ENCODE measurements at regions of chr22 and their contacts with region 1.

Region 1: GRCh38 chr22:50316116-50317065 is 8.9 kb upstream of the PLXNB2 start:
- DNase-seq: no peak
- H3K4me3 ChIP-seq: no peak overlapping the region
- H3K27ac ChIP-seq: no peak overlapping the region
- H3K4me1 ChIP-seq: no peaks in the 10 kb centered on the region
- H3K27me3 ChIP-seq: no peaks in the 10 kb centered on the region
- CTCF ChIP-seq: no peak

Region 2: DNA sequence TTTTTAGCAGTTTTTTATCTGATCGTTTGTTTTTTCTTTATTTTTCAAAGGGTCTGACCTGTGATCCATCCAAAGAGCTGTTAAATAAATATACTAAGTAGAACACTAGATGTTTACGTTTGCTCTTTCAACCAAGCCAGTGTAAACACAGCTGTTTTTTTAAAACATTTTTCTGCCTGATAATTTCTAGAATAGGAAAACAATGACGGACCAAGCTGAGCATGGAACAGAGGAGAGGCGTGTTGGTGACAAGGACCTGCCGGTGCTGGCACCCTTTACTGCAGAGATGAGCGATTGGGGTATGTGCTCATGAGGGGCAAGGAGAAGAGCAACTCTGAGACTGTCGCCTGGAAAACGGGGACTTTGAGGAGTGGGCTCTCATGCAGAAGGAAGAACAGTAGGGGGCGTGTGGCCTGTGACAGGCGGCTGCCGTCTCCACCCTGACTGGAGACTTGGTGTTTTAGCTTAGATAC is 174.5 kb before region 1 on chr22:
- CTCF ChIA-PET with region 1: no interaction called
- POLR2A ChIA-PET with region 1: no interaction called
- intact Hi-C with region 1: no loop called
- DNase-seq: no peak
- H3K4me3 ChIP-seq: no peak overlapping the region
- H3K27ac ChIP-seq: no peak overlapping the region
- H3K4me1 ChIP-seq: no peaks in the 10 kb centered on the region
- H3K27me3 ChIP-seq: no peaks in the 10 kb centered on the region
- CTCF ChIP-seq: peak; percentile 40

Region 3: GRCh38 chr22:50293441-50294318 is 22.7 kb before region 1 on chr22:
- CTCF ChIA-PET with region 1: interaction called, 3 read pairs
- POLR2A ChIA-PET with region 1: interaction called, 23 read pairs
- intact Hi-C with region 1: no loop called
- DNase-seq: peak; percentile 84
- H3K4me3 ChIP-seq: peak overlapping the region; percentile 41
- H3K27ac ChIP-seq: peak overlapping the region; percentile 93
- H3K4me1 ChIP-seq: peaks cover 43% of the 10 kb centered on the region
- H3K27me3 ChIP-seq: no peaks in the 10 kb centered on the region
- CTCF ChIP-seq: no peak

Measured in A673 (cell line).